ENCODE measurements at regions of chr2 and their contacts with region 1.

Region 1: GRCh38 chr2:46032996-46033395 is 264.2 kb upstream of the EPAS1 start:
- DNase-seq: peak; percentile 23
- H3K4me3 Mint-ChIP-seq: no peak overlapping the region
- H3K27ac Mint-ChIP-seq: peak overlapping the region; percentile 84
- H3K4me1 Mint-ChIP-seq: peaks cover 29% of the 10 kb centered on the region
- H3K27me3 Mint-ChIP-seq: no peaks in the 10 kb centered on the region

Region 2: GRCh38 chr2:45664635-45665261 is 368.2 kb before region 1 on chr2:
- intact Hi-C with region 1: no loop called
- DNase-seq: no peak
- H3K4me3 Mint-ChIP-seq: no peak overlapping the region
- H3K27ac Mint-ChIP-seq: no peak overlapping the region
- H3K4me1 Mint-ChIP-seq: peaks cover 16% of the 10 kb centered on the region
- H3K27me3 Mint-ChIP-seq: no peaks in the 10 kb centered on the region

Region 3: DNA sequence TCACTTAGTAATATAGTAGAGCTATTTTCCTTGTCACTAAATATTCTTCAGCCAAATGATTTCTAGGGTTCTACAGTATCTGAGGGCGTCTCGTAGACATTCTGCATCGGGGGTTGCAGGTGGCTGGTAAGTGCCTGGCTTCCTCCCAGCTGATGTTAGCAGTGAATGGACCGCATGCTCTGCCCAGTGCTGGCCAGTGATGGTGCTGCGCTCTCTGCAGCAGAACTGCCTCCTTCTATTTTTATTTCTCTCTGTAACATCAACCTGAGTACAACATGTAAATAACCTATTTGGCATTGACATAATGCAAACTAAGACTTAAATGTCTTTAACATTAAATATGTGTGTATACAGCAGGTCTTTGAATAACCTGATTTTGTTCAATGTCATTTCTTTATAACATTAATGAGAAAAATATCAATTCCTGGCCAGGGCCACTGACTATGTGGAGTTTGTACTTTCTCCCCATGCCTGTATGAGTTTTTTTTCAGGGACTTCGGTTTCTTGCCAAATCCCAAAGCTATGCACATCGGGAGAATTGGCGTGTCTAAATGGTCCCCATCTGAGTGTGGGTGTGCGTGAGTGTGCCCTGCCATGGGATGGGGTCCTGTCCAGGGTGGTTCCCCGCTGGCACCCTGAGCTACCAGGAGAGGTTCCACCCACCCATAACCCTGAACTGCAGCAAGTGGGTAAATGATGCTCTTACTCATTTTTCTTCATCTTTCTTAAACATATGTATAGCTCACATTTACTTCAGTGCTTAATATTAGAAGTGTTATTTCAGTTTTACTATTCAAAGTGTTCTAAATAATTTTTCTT is 14.0 kb before region 1 on chr2:
- intact Hi-C with region 1: loop called (anchors 1 kb)
- DNase-seq: no peak
- H3K4me3 Mint-ChIP-seq: no peak overlapping the region
- H3K27ac Mint-ChIP-seq: peak overlapping the region; percentile 84
- H3K4me1 Mint-ChIP-seq: peaks cover 45% of the 10 kb centered on the region
- H3K27me3 Mint-ChIP-seq: no peaks in the 10 kb centered on the region

Region 4: DNA sequence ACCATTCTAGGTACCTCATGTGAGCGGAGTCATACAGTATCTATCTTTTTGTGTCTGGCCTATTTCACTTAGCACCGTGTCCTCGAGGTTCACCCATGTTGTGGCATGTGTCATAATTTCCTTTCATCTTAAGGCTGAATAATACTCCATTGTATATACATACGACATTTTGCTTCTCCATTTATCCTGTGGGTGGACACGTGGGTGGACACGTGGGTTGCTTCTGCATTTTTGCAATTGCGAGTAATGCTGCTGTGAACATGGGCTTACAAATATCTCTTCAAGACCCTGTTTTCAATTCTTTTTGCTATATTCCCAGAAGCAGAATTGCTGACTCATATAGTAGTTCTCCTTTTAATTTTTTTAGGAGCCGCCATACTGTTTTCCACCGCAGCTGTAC is 20.6 kb after region 1 on chr2:
- intact Hi-C with region 1: loop called (anchors 2 kb)
- DNase-seq: no peak
- H3K4me3 Mint-ChIP-seq: no peak overlapping the region
- H3K27ac Mint-ChIP-seq: no peak overlapping the region
- H3K4me1 Mint-ChIP-seq: peaks cover 30% of the 10 kb centered on the region
- H3K27me3 Mint-ChIP-seq: no peaks in the 10 kb centered on the region

Region 5: GRCh38 chr2:46434851-46435273 is 401.9 kb after region 1 on chr2:
- intact Hi-C with region 1: loop called (anchors 1 kb)
- DNase-seq: no peak
- H3K4me3 Mint-ChIP-seq: peak overlapping the region; percentile 37
- H3K27ac Mint-ChIP-seq: peak overlapping the region; percentile 86
- H3K4me1 Mint-ChIP-seq: peaks cover 94% of the 10 kb centered on the region
- H3K27me3 Mint-ChIP-seq: no peaks in the 10 kb centered on the region

Measured in activated T-helper 2 cell treated with anti-CD3 and anti-CD28 coated beads, Interferon-gamma antibody, Interleukin-2, Interleukin-4, amounts not matched to agents 10 μg/mL and 5 μg/mL and 100 μg/mL, durations not matched to agents 14 hours and 24 hours and 36 hours (primary cell).